Natural killer cell (primary cell): ENCODE measurements at regions of chr7 and their contacts with region 1.

Region 1: GRCh38 chr7:4883374-4884144 is at the start of gene RADIL:
- DNase-seq: peak; percentile 87 to 90
- ATAC-seq: peak; percentile 96 to 99 (median 97)
- H3K4me3 ChIP-seq: no peak within 1 kb of the TSS
- H3K4me3 Mint-ChIP-seq: peak within 1 kb of the TSS; percentile 76
- H3K27ac ChIP-seq: no peak within 1 kb of the TSS
- H3K27ac Mint-ChIP-seq: no peak within 1 kb of the TSS
- H3K4me1 ChIP-seq: peaks cover 13% of the 10 kb centered on the region
- H3K4me1 Mint-ChIP-seq: peaks cover 9 to 14% of the 10 kb centered on the region in 2 donors
- H3K27me3 ChIP-seq: peaks cover 16% of the 10 kb centered on the region
- H3K27me3 Mint-ChIP-seq: peaks cover 0 to 16% of the 10 kb centered on the region in 2 donors
- CTCF ChIP-seq: peak; percentile 72
- total RNA-seq, gene RADIL: not detected

Region 2: GRCh38 chr7:4519819-4520525 is 363.6 kb before region 1 on chr7:
- intact Hi-C with region 1: no loop called
- DNase-seq: no peak
- ATAC-seq: no peak
- H3K4me3 ChIP-seq: no peak overlapping the region
- H3K4me3 Mint-ChIP-seq: no peak overlapping the region
- H3K27ac ChIP-seq: no peak overlapping the region
- H3K27ac Mint-ChIP-seq: no peak overlapping the region
- H3K4me1 ChIP-seq: no peaks in the 10 kb centered on the region
- H3K4me1 Mint-ChIP-seq: no peaks in the 10 kb centered on the region
- H3K27me3 ChIP-seq: no peaks in the 10 kb centered on the region
- H3K27me3 Mint-ChIP-seq: peaks cover 5 to 42% of the 10 kb centered on the region in 2 donors
- CTCF ChIP-seq: no peak

Region 3: DNA sequence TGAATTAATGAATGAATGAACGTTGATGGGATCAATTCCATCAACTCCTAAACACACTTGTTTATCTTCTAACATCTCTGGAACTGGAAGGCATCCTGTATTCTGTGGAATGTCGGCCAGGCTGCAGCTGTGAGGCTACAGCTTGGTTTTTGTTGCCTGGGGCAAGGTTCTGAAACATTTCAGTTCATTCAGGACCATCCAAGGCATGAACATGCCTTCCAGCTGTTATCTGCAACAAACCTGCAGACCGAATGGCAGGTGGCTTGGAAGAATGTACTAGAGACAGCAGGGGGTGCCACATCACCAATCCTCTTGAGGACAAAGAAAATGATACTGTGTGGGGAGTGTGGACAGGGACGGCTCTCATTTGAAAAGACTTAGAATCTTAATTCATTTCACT is 34.2 kb before region 1 on chr7:
- intact Hi-C with region 1: loop called (anchors 2 kb)
- DNase-seq: peak in 1 of 2 donors; percentile 47
- ATAC-seq: peak; percentile 68 to 88 (median 86)
- H3K4me3 ChIP-seq: no peak overlapping the region
- H3K4me3 Mint-ChIP-seq: no peak overlapping the region
- H3K27ac ChIP-seq: no peak overlapping the region
- H3K27ac Mint-ChIP-seq: no peak overlapping the region
- H3K4me1 ChIP-seq: no peaks in the 10 kb centered on the region
- H3K4me1 Mint-ChIP-seq: peaks cover 0 to 5% of the 10 kb centered on the region in 2 donors
- H3K27me3 ChIP-seq: peaks cover 2% of the 10 kb centered on the region
- H3K27me3 Mint-ChIP-seq: peaks cover 9 to 10% of the 10 kb centered on the region in 2 donors
- CTCF ChIP-seq: peak; percentile 51

Region 4: GRCh38 chr7:5231811-5232484 is 348.4 kb after region 1 on chr7:
- intact Hi-C with region 1: no loop called
- DNase-seq: peak in 1 of 2 donors; percentile 28
- ATAC-seq: peak; percentile 32 to 52 (median 38)
- H3K4me3 ChIP-seq: no peak overlapping the region
- H3K4me3 Mint-ChIP-seq: peak overlapping the region; percentile 21
- H3K27ac ChIP-seq: peak overlapping the region; percentile 86
- H3K27ac Mint-ChIP-seq: peak overlapping the region; percentile 43 to 65
- H3K4me1 ChIP-seq: peaks cover 49% of the 10 kb centered on the region
- H3K4me1 Mint-ChIP-seq: peaks cover 16 to 22% of the 10 kb centered on the region in 2 donors
- H3K27me3 ChIP-seq: no peaks in the 10 kb centered on the region
- H3K27me3 Mint-ChIP-seq: peaks cover 0 to 2% of the 10 kb centered on the region in 2 donors
- CTCF ChIP-seq: no peak